MCF 10A (cell line): ENCODE measurements at regions of chr12 and their contacts with region 1.

Region 1: DNA sequence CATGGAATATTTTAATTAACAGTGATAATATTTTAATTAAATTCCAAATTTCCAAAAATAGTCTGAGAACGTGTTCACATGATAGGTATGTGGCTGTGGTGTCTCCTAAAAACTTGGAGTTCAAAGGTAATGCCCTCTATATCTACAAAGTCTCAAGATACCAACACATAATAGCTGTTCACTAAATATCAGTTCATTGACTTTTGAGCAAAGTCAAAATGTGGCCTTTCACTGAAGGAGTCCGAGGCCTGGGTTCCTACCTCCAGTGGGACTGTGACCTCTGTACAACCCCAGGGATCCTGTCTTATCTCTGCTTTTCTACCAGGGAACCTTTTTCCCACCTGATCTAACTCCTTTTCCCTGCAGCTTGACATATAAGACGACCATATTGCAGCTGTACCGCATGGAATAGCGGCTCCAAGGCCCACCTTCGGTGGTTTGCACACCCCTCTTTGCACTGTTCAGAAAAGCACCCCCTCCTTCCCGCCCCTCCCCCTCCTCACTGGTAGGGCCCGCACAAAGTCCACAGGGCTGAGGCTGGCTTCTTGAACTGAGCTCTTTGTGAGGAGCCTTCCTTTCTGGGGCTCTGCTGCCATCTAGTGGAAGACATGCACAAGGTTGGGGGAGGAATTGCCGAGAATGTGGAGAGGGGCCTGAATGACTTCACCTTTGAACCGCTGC is 3.1 kb downstream of the CCND2 start:
- DNase-seq: peak; percentile 91
- H3K4me3 Mint-ChIP-seq: peak overlapping the region; percentile 79
- H3K27ac Mint-ChIP-seq: no peak overlapping the region
- H3K4me1 Mint-ChIP-seq: peaks cover 19% of the 10 kb centered on the region
- H3K27me3 Mint-ChIP-seq: peaks cover 41% of the 10 kb centered on the region
- CTCF ChIP-seq: peak; percentile 93

Region 2: GRCh38 chr12:3885277-3886094 is 391.2 kb before region 1 on chr12:
- CTCF ChIA-PET with region 1: interaction called, 220 read pairs
- POLR2A ChIA-PET with region 1: interaction called, 28 read pairs
- intact Hi-C with region 1: loop called (anchors 1 kb)
- DNase-seq: peak; percentile 47
- H3K4me3 Mint-ChIP-seq: peak overlapping the region; percentile 59
- H3K27ac Mint-ChIP-seq: peak overlapping the region; percentile 63
- H3K4me1 Mint-ChIP-seq: peaks cover 6% of the 10 kb centered on the region
- H3K27me3 Mint-ChIP-seq: peaks cover 20% of the 10 kb centered on the region
- CTCF ChIP-seq: peak; percentile 83

Region 3: DNA sequence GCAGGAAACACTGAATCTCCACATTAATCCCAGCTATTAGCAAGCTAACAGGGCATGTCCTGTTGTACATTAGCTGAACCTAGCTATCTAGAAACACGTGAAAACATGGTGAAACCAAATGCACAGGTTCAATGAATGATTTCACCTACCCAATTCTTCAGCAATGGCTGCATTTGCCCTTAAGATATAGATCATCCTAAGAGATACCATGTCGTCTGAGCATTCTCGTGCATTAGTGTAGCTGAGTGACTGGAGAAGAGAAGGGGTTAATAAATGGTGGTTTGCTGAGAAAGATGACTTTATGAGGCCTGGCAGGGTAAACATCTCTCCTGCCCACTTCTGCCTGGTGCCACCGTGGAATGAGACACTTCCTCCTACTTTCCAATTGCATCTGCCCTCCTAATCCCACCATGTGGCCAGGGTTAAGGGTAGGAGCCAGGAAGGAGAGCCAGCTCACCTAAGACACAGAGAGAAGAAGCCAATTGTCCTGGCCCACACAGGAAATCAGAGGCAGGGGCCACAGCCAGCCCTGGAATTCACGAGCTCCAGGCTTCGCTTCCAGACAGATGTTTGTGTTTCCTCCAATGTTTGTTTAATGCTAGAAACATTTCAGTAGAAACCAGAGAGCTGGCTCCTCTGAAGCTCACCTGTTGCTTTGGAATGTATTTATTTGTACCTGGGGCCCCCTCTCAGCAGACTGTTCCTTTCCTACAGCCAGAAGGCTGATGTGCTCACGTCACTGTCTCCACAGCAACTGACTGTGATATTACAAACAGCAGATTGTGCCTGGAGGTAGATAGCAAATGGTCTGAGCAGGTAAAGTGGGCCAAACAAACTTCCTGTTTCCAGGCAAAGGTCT is 277.5 kb before region 1 on chr12:
- CTCF ChIA-PET with region 1: interaction called, 96 read pairs
- POLR2A ChIA-PET with region 1: interaction called, 7 read pairs
- intact Hi-C with region 1: loop called (anchors 1 kb)
- DNase-seq: peak; percentile 78
- H3K4me3 Mint-ChIP-seq: no peak overlapping the region
- H3K27ac Mint-ChIP-seq: peak overlapping the region; percentile 86
- H3K4me1 Mint-ChIP-seq: peaks cover 12% of the 10 kb centered on the region
- H3K27me3 Mint-ChIP-seq: peaks cover 8% of the 10 kb centered on the region
- CTCF ChIP-seq: no peak

Region 4: GRCh38 chr12:4107436-4107878 is 169.2 kb before region 1 on chr12:
- CTCF ChIA-PET with region 1: interaction called, 50 read pairs
- POLR2A ChIA-PET with region 1: no interaction called
- intact Hi-C with region 1: loop called (anchors 1 kb)
- DNase-seq: peak; percentile 75
- H3K4me3 Mint-ChIP-seq: no peak overlapping the region
- H3K27ac Mint-ChIP-seq: no peak overlapping the region
- H3K4me1 Mint-ChIP-seq: peaks cover 6% of the 10 kb centered on the region
- H3K27me3 Mint-ChIP-seq: peaks cover 33% of the 10 kb centered on the region
- CTCF ChIP-seq: peak; percentile 55

Region 5: DNA sequence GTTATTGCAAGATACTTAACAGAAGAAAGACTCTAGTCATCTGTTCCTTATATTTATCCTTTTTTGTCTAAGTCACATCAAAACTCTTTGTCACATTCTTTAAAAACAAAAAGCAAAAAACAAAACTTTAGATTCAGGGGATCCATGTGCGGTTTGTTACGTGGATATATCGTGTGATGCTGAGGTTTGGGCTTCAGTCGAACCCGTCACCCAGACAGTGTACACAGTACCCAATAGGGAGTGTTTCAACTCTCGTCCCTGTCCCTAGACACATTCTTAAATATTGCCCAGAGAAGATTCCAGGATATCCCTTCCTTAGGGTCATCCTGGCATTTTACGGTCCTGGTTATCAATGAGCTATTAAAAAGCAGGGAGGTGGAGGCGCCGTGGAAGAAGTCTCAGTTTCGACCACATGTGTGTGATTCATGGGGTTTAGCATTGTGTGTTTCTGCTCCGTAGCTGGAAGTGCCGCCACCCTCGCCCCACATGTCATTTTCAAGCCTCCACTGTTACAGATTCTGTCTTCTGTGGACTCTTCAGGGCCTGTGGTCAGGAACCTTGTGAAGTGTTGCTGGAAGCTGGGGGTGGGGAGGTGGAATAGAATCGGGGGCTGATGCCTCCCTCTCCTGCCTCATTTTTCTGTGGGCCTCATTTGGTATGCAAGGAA is 16.8 kb after region 1 on chr12:
- CTCF ChIA-PET with region 1: interaction called, 38 read pairs
- POLR2A ChIA-PET with region 1: interaction called, 3 read pairs
- intact Hi-C with region 1: no loop called
- DNase-seq: no peak
- H3K4me3 Mint-ChIP-seq: no peak overlapping the region
- H3K27ac Mint-ChIP-seq: no peak overlapping the region
- H3K4me1 Mint-ChIP-seq: no peaks in the 10 kb centered on the region
- H3K27me3 Mint-ChIP-seq: no peaks in the 10 kb centered on the region
- CTCF ChIP-seq: no peak